ENCODE measurements at regions of chr2 and their contacts with region 1.

Region 1: DNA sequence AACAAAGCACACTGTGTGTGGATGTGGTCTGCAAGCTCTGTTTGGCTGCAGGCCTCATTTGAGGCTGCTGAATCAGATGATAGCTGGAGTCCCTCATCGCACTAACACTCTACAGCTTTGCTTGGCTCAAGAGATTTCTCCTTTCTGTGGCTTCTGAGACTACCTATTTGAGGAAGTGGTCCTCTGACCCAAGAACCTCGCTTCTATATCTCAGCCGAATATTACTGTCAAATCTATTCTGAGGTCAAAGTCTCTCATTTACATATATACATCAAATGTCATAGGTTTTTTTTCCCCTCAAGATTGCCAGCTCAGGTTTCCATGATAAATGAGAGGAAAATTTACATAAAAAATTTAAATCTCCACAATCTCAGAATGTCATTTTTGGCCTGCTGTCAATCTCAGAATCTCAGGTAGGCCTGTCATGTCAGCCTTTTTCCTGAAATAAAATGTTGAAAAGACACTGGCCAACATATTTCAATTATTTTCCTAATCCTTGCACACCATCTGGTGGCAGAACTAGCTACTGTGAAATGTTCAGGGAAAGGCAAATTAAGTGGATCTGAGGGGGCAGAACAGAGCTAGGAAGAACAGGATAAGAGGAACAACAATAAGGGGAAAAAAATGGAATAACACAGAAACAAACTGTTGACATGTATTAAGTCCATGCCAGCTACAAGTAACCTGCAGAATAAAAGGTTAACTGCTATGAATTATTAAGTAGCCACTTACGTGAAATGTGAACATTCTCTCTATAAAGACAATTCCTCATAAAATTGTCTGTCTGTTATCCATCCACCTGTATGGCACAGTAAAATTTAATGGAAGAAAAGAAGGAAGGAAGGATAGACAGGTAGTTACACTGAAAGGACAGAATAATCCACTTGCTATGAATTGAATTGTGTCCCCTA is 39.3 kb downstream of the AP1S3 start:
- DNase-seq: no peak

Region 2: GRCh38 chr2:222960126-222960525 is 837.9 kb before region 1 on chr2:
- intact Hi-C with region 1: loop called in 1 of 2 experiments (anchors 10 kb)
- DNase-seq: no peak

Region 3: DNA sequence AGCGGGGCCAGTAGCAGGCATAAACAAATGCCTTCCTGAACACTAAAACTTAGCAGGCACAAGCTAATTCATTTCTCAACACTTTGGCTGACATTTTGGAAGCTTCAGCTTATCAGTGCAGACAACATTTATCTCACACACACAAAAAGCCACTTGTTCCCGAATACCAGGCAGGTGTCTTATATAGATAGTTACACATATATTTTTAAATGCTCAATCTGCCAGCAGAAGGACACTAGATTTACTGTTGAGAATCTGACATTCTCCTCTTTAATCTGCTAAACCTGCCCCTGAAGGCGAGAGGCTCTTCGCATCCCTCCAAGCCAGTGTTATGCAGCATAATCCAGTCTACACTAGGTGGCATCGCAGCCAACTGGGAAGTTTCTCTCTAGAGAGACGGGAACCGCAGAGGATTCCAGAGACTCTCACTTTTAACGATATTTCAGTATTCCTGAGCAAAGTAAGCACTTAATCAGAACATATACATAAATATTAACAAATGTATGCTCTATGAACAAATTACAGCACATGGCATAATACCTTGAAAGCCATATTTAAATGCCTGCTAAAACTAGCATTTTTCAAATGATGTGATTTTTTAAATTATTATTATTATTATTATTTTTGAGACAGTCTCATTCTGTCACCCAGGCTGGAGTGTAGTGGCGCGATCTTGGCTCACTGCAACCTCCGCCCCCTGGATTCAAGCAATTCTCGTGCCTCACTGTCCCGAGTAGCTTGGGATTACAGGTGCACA is 105.7 kb before region 1 on chr2:
- intact Hi-C with region 1: loop called in 1 of 2 experiments (anchors 10 kb)
- DNase-seq: no peak

Region 4: GRCh38 chr2:223751012-223751411 is 47.1 kb before region 1 on chr2:
- intact Hi-C with region 1: no loop called
- DNase-seq: no peak

Region 5: GRCh38 chr2:224147174-224147573 is 349.1 kb after region 1 on chr2:
- intact Hi-C with region 1: no loop called
- DNase-seq: no peak

Measured in posterior vena cava (tissue), 2 donors.